ENCODE measurements at regions of chr14 and their contacts with region 1.

Region 1: DNA sequence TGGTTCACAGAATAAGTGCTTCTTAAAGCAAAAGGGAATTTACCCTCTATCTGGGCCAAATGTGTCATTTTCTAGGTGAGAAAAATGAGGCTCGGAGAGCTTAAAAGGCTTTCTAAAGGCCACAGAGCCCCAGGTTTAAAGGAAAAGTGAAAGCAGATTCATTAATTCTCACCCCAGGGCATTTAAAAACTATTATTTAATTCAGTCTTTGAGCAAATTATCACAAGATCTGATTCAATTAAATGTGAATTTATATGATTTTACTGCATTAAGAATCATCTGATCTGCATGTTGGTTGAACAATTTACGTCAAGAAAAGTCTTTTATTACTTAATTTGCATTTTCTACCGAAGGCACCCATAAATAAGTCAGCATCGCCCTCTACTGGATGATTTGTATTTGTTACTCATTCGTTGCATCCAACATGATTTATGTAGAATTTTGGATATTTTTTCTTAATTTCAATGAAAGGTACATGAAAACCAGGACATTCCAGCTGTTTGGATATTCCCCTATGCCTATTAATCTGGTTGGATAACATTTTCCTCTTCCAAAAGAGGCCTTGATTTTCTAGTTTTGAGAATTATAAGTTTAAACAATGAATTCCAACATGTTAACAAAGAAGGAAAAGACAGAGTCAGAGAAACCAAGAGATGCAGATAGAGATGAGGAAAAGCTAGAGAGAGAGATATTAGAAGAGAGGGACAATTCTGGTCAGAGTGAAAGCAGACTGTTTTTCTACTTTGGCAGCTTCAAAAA is 19.1 kb upstream of the DHRS7 start:
- DNase-seq: peak; percentile 91
- H3K4me3 ChIP-seq: peak overlapping the region; percentile 65
- H3K27ac ChIP-seq: peak overlapping the region; percentile 42
- H3K4me1 ChIP-seq: peaks cover 38% of the 10 kb centered on the region
- CTCF ChIP-seq: peak; percentile 100

Region 2: DNA sequence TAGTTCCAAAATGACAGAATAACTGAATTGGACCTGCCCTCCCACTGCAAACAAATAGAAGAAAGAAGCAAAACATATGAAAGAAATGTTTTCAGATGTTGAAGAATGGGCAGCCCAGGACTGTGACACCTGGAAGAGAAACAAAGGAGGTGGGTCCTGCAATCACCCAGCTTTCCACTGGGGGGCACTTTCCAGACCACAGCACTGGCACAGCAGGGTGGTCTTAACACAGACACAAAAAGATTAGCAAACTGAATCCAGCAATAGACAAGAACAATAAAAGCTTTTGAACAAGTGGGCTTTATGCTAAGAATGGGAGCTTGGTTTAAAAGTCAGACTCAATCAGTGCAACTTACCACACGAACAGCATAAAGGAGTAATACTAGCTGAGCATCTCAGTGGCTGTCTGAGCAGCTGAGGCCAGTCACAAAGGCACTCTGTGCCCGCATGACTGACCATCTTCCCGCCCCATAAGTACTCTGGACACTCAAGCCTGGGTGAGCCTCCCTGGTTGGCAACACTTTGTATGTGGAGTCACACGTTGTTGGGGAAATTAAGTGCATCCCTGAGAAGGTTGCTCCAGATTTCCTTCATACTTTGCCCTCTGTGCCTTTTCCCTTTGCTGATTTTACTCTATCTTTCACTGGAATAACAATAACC is 672.3 kb before region 1 on chr14:
- CTCF ChIA-PET with region 1: no interaction called
- POLR2A ChIA-PET with region 1: no interaction called
- intact Hi-C with region 1: loop called (anchors 2 kb)
- DNase-seq: peak; percentile 29
- H3K4me3 ChIP-seq: no peak overlapping the region
- H3K27ac ChIP-seq: no peak overlapping the region
- H3K4me1 ChIP-seq: no peaks in the 10 kb centered on the region
- CTCF ChIP-seq: peak; percentile 86

Region 3: DNA sequence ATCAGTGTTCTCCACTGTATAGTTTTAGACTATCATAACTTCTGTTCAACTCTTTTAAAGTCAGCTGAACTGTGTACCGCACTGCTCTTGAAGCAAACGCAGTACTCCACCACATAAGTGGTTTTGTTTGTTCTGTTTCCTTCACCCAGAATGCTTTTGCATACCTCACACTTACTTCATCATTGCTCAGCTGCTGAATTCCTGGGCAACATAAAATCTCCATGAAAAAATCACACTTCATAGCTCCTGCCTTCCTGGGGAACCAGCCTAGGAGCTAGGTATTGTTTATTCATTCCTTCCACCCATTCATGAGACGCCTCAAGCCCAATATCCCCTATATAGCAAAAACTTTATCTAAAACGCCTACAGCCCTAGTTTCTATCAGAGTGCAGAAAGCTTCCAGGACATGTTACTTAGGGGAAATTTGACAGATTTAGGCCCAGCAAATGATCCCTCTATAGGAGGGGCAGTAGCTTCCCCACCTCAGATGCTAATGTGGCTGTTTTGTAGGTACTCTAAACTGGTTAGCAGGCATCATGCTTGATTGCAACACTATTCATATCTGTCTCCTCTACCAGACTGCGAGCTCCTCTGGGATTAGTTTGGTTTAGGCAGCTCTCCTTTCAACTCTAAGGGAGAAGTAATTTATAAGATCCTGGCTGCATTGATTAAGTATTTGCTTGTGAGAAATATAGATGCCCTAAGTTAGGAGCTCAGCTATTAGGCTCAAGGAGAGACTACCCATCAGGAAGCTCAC is 219.9 kb before region 1 on chr14:
- CTCF ChIA-PET with region 1: interaction called, 13 read pairs
- POLR2A ChIA-PET with region 1: interaction called, 44 read pairs
- intact Hi-C with region 1: loop called (anchors 1 kb)
- DNase-seq: peak; percentile 15
- H3K4me3 ChIP-seq: peak overlapping the region; percentile 56
- H3K27ac ChIP-seq: peak overlapping the region; percentile 73
- H3K4me1 ChIP-seq: peaks cover 14% of the 10 kb centered on the region
- CTCF ChIP-seq: no peak

Region 4: GRCh38 chr14:60164712-60165546 is 19.4 kb before region 1 on chr14 and contains the start of gene DHRS7:
- CTCF ChIA-PET with region 1: interaction called, 3 read pairs
- POLR2A ChIA-PET with region 1: interaction called, 13 read pairs
- intact Hi-C with region 1: no loop called
- DNase-seq: peak; percentile 88
- H3K4me3 ChIP-seq: peak within 1 kb of the TSS; percentile 70
- H3K27ac ChIP-seq: peak within 1 kb of the TSS; percentile 69
- H3K4me1 ChIP-seq: peaks cover 28% of the 10 kb centered on the region
- CTCF ChIP-seq: peak; percentile 63
- total RNA-seq, gene DHRS7: 30.9 and 32.7 TPM in 2 replicates

Region 5: DNA sequence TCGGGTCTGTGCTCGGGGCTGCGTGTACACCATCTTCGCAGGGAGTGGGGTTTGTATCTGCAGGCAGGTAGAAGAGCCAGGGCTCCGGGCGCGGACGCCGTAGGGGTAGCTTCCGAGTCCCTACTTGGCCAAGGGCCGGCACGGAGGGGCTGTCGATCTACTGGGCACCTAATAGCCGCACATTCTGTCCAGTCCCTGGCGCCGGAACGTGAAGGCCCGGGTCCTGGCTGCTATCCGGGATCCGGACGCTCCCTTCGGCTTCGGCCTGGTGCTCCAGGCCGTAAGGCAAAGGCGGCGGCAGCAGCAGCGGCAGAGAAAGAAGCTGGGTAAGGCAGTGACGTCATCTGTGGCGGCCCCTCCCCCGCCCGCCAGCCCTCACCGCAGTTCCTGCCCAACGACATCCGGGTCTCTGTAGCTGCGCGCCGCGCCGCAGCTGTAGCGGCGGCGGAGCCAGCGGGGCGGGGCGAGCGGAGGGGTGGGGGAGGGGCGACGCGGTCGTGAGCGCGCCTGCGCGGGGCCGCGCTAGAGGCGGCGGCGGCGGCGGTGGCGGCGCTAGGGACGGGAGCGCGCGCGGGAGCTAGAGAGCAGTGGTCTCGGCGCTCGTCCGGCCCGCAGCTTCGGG is 64.5 kb after region 1 on chr14 and contains the start of gene PPM1A:
- CTCF ChIA-PET with region 1: no interaction called
- POLR2A ChIA-PET with region 1: interaction called, 24 read pairs
- intact Hi-C with region 1: loop called (anchors 1 kb)
- DNase-seq: peak; percentile 97
- H3K4me3 ChIP-seq: peak within 1 kb of the TSS; percentile 87
- H3K27ac ChIP-seq: peak within 1 kb of the TSS; percentile 92
- H3K4me1 ChIP-seq: peaks cover 55% of the 10 kb centered on the region
- CTCF ChIP-seq: no peak
- total RNA-seq, gene PPM1A: 25.4 and 28.8 TPM in 2 replicates

Region 6: GRCh38 chr14:60561845-60562746 is 377.8 kb after region 1 on chr14:
- CTCF ChIA-PET with region 1: interaction called, 4 read pairs
- POLR2A ChIA-PET with region 1: interaction called, 3 read pairs
- intact Hi-C with region 1: loop called (anchors 1 kb)
- DNase-seq: peak; percentile 90
- H3K4me3 ChIP-seq: no peak overlapping the region
- H3K27ac ChIP-seq: no peak overlapping the region
- H3K4me1 ChIP-seq: peaks cover 78% of the 10 kb centered on the region
- CTCF ChIP-seq: peak; percentile 97

Measured in OCI-LY7 (cell line).